ENCODE measurements at regions of chr3 and their contacts with region 1.

Region 1: DNA sequence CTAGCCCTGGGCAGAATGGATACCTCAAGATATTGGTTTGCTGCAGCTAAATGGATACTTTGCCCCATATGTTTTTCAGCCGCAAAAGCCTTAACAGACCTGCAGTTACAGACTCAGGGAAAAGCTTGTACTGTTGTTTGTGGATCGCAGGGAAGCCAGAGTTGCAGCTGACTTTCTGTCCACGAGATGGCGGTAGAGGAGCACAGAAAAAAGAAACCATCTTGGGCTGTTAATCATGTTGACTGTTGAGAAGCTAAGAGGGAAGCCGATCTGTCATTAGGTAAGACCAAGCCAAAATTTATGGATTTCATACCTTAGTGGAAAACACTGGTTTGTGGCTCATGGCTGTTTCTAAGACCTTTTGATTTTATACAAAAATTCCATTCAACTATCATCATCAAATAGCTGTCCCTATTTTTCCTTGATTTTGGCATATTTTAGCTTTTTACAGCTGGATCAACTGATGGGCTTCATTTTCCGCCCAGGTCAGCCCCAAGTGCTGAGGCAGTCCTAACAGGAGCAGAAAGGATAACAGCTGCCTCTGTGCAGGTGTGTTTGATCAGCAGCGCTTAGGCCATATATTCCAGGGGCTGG is 205.7 kb upstream of the ZPLD1 start:
- DNase-seq: peak; percentile 27
- CTCF ChIP-seq: peak; percentile 92

Region 2: DNA sequence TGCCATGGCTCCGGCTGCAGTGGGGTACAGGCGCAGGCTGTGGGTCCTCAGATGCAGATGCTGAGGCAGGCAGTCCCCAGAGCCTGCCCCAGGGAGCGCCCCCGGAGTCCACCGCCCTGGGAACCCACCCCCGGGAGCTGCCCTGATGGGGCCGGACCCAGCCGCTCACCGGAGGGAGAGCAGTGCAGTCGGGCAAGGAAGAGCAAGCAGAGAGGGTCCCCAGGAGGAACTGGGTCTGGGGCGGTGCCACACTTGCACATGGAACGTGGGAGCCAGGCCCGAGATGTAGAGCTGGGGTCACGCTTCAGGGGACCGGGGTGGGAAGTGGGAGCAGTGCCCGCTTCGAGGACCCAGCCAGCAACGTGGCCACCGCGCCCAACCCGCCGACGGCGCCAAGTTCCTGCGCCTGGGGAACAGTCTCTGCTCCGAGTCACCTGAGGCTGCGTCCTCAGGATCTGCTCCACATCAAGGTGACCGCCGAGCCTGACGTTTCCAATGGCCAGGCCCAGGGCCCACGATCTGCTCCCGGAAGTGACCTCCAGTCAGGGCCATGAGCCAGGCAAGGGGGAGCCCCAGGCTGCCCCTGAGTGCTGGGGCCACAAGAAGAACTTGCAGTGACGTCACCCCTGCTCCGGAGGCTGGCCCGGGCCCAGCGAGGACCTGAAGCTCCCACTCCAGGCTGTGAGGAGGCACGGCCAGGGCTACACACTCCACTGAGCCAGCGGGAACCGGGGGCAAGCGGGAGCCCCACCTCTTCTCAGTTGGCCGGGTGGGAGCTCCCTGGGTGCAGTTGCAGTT is 1546.9 kb before region 1 on chr3:
- CTCF ChIA-PET with region 1: no interaction called
- POLR2A ChIA-PET with region 1: no interaction called
- DNase-seq: no peak
- CTCF ChIP-seq: no peak

Region 3: GRCh38 chr3:101791778-101792177 is 437.4 kb before region 1 on chr3:
- CTCF ChIA-PET with region 1: interaction called, 11 read pairs
- POLR2A ChIA-PET with region 1: no interaction called
- DNase-seq: peak; percentile 27
- CTCF ChIP-seq: no peak

Region 4: DNA sequence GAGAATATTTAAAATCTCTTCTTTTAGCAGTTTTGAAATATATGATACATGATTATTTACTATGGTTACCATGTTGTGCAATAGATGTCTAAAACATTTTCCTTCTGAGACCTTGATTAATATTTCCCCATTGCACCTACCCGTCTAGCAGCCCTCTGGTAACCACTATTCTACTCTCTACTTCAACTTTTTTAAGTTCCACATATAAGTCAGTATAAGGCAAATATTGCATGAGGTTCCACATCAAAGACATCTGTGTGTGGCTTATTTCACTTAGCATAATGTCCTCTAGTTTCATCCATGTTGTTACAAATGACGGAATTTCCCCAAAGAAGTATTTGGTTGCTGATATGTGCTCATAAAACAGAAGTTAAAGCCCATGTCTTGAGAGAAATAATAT is 409.4 kb before region 1 on chr3:
- CTCF ChIA-PET with region 1: interaction called, 443 read pairs
- POLR2A ChIA-PET with region 1: no interaction called
- DNase-seq: no peak
- CTCF ChIP-seq: no peak

Region 5: GRCh38 chr3:101950510-101950909 is 278.6 kb before region 1 on chr3:
- CTCF ChIA-PET with region 1: interaction called, 10 read pairs
- POLR2A ChIA-PET with region 1: no interaction called
- DNase-seq: peak; percentile 24
- CTCF ChIP-seq: no peak

Region 6: GRCh38 chr3:102066491-102066890 is 162.7 kb before region 1 on chr3:
- CTCF ChIA-PET with region 1: no interaction called
- POLR2A ChIA-PET with region 1: no interaction called
- DNase-seq: no peak
- CTCF ChIP-seq: no peak

Region 7: DNA sequence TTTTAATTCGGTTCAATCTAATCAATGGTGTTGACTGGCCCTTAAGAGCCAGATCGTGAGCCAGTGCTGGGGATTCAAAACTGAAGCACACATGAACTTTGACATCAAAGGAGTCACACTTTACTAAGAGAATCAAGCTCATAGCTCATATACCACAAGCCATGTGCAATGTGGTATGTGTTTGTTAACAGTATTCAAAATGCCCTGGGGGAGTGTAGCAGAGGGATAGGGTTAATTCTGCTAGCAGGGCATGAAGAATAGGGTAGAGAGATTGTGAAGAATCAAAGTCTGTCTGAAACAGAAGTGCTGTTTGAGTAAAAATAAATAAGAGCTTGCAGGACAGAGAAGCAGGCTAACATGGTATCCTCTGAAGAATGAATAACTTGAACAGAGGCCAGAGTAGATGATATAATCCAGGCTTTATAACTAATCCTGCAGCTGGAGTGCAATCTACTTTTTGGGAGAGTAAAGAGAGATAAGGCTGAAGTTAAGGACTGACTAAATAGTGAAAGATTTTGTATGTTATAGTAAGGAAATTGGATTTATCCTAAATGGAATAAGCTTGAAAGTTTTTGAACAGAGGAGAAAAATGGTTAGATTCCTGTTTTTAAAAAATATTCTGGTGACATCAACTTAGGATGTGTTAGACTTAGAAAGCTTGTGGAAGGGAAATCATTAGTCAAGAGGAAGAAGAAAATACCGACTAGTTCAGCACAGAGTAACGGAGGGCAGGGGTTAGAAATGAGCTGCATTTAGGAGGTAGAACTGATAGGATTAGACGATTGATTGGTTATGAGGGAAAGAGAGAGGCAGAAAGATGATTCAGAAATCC is 87.8 kb before region 1 on chr3:
- CTCF ChIA-PET with region 1: no interaction called
- POLR2A ChIA-PET with region 1: no interaction called
- DNase-seq: no peak
- CTCF ChIP-seq: no peak

Region 8: GRCh38 chr3:102180291-102181039 is 48.7 kb before region 1 on chr3:
- CTCF ChIA-PET with region 1: interaction called, 16 read pairs
- POLR2A ChIA-PET with region 1: no interaction called
- DNase-seq: no peak
- CTCF ChIP-seq: no peak

Region 9: DNA sequence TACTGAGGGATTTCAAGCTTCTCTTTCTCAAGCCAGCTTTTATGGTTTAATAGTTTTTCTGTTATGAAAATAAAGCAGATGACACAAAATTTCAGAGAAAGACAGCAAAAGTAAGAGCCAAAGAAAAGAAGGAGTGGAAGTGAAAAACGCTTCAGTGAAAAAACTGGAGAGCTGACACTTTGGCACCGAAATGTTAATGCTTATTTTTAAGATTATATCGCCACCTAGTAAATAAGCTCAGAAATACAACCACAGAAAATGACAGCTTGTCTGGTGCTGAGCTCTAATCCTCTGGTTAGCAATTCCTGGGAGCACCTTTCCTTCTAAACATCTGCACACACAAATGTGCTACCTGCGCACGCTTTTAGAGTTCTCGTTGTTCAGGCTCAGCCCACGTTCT is 307.3 kb after region 1 on chr3:
- CTCF ChIA-PET with region 1: interaction called, 423 read pairs
- POLR2A ChIA-PET with region 1: no interaction called
- DNase-seq: peak; percentile 17
- CTCF ChIP-seq: peak; percentile 51

Region 10: DNA sequence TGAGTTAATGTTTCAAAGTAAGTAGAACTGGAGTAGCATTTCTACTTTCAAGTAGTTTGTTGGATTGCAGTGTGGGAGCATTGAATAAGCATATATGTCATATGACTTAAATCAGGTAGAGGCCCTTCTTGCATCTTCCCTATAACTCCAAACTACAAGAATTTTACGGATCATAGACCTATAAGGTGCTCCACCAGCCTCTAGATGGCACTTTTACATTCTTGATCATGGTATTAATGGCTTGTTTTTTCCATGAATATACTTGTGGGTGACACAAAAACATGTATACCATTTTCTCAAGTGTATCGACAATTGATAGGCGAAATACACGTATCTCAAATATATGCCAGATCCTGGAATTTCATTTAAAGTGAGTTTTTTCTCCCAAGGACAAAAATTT is 516.7 kb after region 1 on chr3:
- CTCF ChIA-PET with region 1: interaction called, 14 read pairs
- POLR2A ChIA-PET with region 1: no interaction called
- DNase-seq: no peak
- CTCF ChIP-seq: no peak

Measured in GM10248 (cell line).